Activated naive CD4-positive, alpha-beta T cell treated with anti-CD3 and anti-CD28 coated beads for 36 hours (primary cell): ENCODE measurements at regions of chr5 and their contacts with region 1.

Region 1: GRCh38 chr5:131589510-131590348 is 45.3 kb downstream of the RAPGEF6 start:
- DNase-seq: no peak
- H3K4me3 Mint-ChIP-seq: no peak overlapping the region
- H3K27ac Mint-ChIP-seq: peak overlapping the region; percentile 58
- H3K4me1 Mint-ChIP-seq: peaks cover 42% of the 10 kb centered on the region
- H3K27me3 Mint-ChIP-seq: no peaks in the 10 kb centered on the region

Region 2: DNA sequence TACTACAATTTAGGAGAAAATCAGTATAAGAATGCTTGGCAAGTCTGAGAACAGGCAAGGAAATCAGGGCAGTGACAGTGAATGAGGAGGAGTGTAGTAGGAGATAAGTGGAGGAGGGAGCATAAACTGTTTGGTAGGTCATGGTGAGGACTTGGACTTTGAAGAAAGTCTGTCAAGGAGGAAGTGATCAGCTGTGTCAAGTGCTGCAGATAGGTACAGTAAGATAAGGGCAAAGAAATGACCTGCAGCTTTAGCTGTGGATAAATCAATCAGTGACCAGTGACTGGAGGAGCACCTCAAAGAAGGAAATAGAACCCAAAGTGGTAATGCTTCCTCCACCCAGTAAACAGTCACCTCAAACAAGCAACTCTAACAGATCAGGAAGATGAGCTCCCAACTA is 61.0 kb before region 1 on chr5:
- CTCF ChIA-PET with region 1: interaction called, 10 read pairs
- intact Hi-C with region 1: no loop called
- DNase-seq: no peak
- H3K4me3 Mint-ChIP-seq: no peak overlapping the region
- H3K27ac Mint-ChIP-seq: peak overlapping the region; percentile 18
- H3K4me1 Mint-ChIP-seq: peaks cover 73% of the 10 kb centered on the region
- H3K27me3 Mint-ChIP-seq: no peaks in the 10 kb centered on the region

Region 3: DNA sequence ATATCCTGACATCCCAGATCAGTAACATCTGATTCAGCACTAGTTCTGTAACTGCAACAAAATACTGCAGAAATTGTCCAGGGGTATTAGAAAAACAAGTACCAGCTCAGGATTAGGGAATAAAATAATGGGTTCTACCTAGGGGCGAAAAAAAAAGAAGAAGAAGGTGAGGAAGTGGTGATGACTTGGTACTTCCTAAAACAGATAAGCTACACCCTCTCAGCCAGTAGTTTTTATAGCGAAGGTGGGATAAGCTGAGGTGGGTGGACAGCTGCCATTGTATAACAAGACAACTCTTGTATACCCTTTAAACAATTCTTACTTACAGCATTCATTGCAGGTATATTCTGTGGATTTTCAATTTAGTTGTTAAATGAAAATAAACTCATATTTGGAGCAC is 26.2 kb after region 1 on chr5:
- CTCF ChIA-PET with region 1: interaction called, 10 read pairs
- intact Hi-C with region 1: no loop called
- DNase-seq: no peak
- H3K4me3 Mint-ChIP-seq: no peak overlapping the region
- H3K27ac Mint-ChIP-seq: no peak overlapping the region
- H3K4me1 Mint-ChIP-seq: peaks cover 67% of the 10 kb centered on the region
- H3K27me3 Mint-ChIP-seq: no peaks in the 10 kb centered on the region

Region 4: DNA sequence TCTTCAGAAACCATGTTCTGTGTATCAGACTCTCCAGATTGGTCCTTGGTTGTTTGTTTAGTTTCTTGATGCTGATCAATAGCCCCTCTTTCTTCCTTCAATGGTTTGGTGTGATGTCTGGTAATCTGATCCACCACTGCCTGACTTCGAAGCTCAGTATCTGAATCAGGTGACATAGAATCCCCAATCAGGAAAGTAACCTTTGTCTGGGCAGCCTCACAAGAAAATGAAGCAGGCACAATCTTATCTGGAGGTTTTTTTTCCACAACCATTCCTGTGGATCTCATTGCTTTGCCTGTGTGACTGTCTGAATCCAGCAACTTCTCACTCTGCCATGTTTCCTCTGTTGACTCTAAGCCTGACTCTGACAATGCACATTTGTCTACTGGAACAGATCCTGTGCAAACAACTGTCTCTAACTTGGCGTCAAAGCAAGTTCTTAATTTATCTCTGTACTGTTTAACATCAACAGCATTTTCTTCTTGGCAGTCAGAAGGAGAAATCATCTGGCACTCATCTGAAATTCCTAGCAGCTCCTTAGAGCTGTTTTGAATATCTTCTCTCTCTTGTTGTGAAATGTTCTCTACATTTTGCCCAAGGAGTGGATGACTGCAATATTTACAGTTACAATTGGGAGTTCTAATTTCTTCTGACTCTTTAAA is 82.4 kb after region 1 on chr5:
- CTCF ChIA-PET with region 1: interaction called, 3 read pairs
- intact Hi-C with region 1: loop called (anchors 2 kb)
- DNase-seq: no peak
- H3K4me3 Mint-ChIP-seq: no peak overlapping the region
- H3K27ac Mint-ChIP-seq: no peak overlapping the region
- H3K4me1 Mint-ChIP-seq: peaks cover 23% of the 10 kb centered on the region
- H3K27me3 Mint-ChIP-seq: no peaks in the 10 kb centered on the region

Region 5: GRCh38 chr5:131854134-131854533 is 264.4 kb after region 1 on chr5:
- CTCF ChIA-PET with region 1: no interaction called
- intact Hi-C with region 1: loop called (anchors 5 kb)
- DNase-seq: peak; percentile 37
- H3K4me3 Mint-ChIP-seq: no peak overlapping the region
- H3K27ac Mint-ChIP-seq: no peak overlapping the region
- H3K4me1 Mint-ChIP-seq: peaks cover 10% of the 10 kb centered on the region
- H3K27me3 Mint-ChIP-seq: no peaks in the 10 kb centered on the region

Region 6: DNA sequence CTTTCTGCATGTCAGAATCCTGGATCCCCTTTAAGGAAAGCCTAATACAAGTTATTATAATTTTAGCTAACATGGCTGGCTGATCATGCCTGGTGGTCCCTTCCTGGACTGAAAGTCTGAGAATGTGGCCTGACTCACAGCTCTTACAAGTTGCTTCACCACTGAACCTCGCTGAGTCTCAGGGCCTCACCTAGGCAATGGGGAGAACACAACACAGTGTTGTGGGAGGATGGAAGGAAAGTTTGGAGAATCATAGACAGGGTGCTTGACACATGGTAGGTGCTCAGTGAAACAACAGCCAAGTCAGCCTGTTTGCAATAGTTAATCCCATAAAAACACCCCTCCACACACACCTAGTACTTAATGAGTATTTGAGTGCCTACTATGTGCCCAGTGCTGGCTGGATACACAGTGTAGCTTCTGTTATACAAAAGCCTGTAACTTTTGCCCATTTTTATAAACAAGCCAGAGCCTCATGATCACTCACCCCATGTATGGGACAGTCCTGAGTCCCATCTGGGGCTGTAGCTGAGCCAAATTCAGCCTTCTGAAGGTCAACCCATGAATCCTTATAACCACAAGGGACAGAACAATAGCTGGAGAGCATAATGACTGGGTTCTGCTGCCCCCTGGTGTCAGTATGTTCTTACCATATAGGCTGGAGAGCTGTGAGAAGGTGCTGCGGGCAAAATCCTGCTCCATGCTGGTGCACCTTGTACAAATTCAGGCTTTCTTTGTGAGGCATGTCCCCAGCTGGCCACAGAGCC is 417.9 kb after region 1 on chr5:
- CTCF ChIA-PET with region 1: interaction called, 130 read pairs
- intact Hi-C with region 1: loop called (anchors 1 kb)
- DNase-seq: peak; percentile 93
- H3K4me3 Mint-ChIP-seq: no peak overlapping the region
- H3K27ac Mint-ChIP-seq: no peak overlapping the region
- H3K4me1 Mint-ChIP-seq: peaks cover 17% of the 10 kb centered on the region
- H3K27me3 Mint-ChIP-seq: peaks cover 19% of the 10 kb centered on the region